AG04450 (cell line): ENCODE measurements at regions of chr6 and their contacts with region 1.

Region 1: DNA sequence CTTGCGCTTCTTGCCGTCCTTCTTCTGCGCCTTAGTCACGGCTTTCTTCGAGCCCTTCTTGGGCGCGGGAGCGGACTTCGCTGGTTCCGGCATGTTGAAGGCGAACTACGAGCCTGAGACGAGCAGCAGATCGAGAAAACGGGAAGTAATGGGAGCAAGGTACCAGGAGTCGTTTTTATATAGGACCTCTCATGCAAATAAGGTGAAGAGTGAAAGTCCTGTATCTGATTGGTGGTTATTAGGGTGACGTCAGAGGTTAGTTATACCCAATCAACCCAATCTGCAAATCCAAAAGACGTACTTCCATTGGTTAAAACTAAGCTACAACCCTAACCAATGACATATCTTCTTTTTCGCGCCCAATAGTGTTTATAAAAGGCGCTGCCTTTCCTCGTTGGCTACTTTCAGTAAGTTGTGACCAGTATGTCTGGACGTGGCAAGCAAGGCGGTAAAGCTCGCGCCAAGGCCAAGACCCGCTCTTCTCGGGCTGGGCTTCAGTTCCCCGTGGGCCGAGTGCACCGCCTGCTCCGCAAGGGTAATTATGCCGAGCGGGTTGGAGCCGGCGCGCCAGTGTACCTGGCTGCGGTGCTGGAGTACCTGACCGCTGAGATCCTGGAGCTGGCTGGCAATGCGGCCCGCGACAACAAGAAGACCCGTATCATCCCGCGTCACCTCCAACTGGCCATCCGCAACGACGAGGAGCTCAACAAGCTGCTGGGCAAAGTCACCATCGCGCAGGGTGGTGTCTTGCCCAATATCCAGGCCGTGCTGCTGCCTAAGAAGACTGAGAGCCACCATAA is 100.6 kb upstream of the PRSS16 start:
- DNase-seq: peak; percentile 99
- H3K4me3 ChIP-seq: peak overlapping the region; percentile 73
- H3K27ac ChIP-seq: peak overlapping the region; percentile 98
- H3K27me3 ChIP-seq: no peaks in the 10 kb centered on the region
- CTCF ChIP-seq: no peak

Region 2: GRCh38 chr6:26025894-26026832 is 1120.7 kb before region 1 on chr6:
- CTCF ChIA-PET with region 1: no interaction called
- POLR2A ChIA-PET with region 1: interaction called, 14 read pairs
- DNase-seq: peak; percentile 94
- H3K4me3 ChIP-seq: peak overlapping the region; percentile 78
- H3K27ac ChIP-seq: peak overlapping the region; percentile 91
- H3K27me3 ChIP-seq: no peaks in the 10 kb centered on the region
- CTCF ChIP-seq: peak; percentile 93

Region 3: DNA sequence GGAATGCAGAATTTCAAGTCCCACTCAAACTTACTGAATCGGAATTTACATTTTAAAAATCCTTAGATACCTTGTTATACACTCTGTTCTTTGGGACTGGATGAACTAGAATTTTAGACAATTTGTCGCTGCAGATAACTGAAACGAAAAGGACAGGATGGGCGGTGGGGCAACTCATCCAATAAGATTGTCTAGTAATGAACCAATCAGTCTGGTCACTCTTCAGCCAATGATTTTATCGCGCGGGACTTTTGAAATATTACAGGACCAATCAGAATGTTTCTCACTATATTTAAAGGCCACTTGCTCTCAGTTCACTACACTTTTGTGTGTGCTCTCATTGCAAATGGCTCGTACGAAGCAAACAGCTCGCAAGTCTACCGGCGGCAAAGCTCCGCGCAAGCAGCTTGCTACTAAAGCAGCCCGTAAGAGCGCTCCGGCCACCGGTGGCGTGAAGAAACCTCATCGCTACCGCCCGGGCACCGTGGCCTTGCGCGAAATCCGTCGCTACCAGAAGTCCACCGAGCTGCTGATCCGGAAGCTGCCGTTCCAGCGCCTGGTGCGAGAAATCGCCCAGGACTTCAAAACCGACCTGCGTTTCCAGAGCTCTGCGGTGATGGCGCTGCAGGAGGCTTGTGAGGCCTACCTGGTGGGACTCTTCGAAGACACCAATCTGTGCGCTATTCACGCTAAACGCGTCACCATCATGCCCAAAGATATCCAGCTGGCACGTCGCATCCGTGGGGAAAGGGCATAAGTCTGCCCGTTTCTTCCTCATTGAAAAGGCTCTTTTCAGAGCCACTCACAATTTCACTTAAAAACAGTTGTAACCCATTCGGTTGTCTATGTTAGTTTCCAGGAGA is 1101.6 kb before region 1 on chr6:
- CTCF ChIA-PET with region 1: no interaction called
- POLR2A ChIA-PET with region 1: interaction called, 18 read pairs
- DNase-seq: peak; percentile 82
- H3K4me3 ChIP-seq: peak overlapping the region; percentile 66
- H3K27ac ChIP-seq: peak overlapping the region; percentile 63
- H3K27me3 ChIP-seq: no peaks in the 10 kb centered on the region
- CTCF ChIP-seq: peak; percentile 19; the same call in 1 of the 2 replicates

Region 4: DNA sequence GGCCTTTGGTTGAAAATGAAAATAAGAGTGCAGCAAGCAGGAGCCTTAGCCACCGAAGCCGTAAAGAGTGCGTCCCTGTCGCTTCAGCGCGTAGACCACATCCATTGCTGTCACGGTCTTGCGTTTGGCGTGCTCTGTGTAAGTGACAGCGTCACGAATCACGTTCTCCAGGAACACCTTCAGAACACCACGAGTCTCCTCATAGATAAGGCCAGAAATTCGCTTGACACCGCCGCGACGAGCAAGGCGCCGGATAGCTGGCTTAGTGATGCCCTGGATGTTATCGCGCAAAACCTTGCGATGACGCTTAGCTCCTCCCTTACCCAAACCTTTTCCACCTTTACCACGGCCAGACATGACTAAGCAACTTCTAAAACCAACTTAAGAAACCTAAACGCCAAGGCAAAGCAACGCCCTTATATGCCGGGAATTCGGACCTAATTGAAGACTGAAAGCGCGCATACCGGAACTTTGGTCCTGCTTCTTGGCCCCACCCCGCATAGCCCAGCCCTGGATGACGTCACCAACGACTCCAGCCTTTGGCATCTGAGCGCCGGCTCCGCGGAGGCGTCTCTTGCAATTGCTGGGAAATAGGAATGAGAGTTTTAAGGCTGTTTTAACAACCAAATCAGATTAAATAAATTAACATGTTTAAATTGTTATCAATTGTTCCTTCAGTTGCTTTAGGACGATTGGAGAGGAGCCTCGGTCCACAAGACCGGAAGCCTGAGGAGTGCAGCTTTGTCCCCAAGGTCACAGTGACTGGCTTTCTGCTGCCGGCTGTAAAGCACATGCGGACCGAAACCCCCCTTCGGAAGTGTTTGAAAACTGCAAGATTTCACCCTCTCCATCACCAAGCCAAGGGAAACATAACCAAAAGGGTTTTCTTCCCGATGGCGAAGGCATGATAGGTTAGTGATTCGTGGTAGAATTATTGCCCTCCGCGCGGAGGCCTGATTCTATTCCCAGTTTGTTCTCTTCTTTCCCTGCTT is 861.5 kb before region 1 on chr6:
- CTCF ChIA-PET with region 1: no interaction called
- POLR2A ChIA-PET with region 1: interaction called, 10 read pairs
- DNase-seq: peak; percentile 97
- H3K4me3 ChIP-seq: peak overlapping the region; percentile 99
- H3K27ac ChIP-seq: peak overlapping the region; percentile 98
- H3K27me3 ChIP-seq: no peaks in the 10 kb centered on the region
- CTCF ChIP-seq: no peak

Region 5: DNA sequence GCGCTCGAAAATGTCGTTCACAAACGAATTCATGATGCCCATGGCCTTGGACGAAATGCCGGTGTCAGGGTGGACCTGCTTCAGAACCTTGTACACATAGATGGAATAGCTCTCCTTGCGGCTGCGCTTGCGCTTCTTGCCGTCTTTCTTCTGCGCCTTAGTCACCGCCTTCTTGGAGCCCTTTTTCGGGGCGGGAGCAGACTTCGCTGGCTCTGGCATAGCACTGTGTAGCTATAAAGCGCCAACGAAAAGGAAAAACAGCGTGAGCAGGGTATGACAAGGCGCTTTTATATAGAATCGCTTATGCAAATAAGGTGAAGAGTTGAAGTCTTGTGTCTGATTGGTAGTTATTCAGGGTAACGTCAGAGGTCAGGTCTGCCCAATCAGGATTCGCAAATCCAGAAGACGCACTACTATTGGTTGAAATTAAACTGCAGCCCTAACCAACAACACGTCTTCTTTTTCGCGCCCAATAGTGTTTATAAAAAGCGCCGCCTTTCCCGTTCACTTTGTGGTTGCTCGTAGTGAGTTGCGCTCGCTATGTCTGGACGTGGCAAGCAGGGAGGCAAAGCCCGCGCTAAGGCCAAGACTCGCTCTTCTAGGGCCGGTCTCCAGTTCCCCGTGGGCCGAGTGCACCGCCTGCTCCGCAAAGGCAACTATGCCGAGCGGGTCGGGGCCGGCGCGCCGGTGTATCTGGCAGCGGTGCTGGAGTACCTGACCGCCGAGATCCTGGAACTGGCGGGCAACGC is 14.2 kb before region 1 on chr6:
- CTCF ChIA-PET with region 1: interaction called, 3 read pairs
- POLR2A ChIA-PET with region 1: interaction called, 251 read pairs
- DNase-seq: peak; percentile 100
- H3K4me3 ChIP-seq: peak overlapping the region; percentile 70
- H3K27ac ChIP-seq: peak overlapping the region; percentile 96
- H3K27me3 ChIP-seq: no peaks in the 10 kb centered on the region
- CTCF ChIP-seq: no peak

Region 6: DNA sequence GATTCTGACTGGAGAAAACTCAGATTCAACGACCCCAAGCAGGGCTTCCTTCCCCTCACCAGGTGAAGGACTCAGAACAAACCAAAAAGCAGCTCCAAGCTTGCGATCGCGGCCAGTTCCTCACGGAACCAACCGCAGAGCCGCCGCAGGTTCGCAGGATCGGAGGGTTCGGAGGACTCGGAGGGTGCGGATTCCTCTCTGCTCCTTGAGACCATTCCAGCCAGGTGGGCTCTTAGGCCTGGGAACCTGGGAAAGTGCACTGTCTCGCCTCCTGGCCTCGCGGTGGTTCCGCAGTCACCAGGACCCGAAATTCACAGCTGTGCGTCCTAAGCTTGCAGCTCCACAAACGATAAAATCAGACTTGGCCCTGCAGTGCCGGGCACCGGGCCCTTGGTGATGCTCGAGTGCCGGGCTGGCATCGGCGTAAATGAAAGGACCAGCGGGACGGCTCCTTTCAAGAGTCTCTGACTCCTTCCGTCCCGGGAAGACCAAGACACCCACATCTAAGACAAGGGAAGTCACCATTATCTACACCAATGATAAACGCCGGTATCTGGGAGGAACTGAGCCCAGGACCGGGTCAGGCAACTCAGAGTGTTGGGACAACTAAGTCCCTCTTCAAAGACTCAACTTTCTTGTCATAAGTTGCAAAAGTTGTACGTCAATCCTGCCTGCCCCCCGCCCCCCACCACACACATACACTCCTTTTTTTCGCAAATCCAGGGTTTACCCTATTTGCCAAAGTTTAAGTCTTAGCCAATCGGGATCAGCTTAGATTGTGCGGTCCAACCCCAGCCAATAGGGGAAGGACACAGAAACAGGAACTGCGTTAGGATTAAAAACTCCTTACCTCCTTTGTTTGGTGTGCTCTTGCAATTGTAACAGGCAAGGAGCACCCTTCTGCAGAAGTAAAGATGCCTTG is 30.8 kb after region 1 on chr6:
- CTCF ChIA-PET with region 1: interaction called, 3 read pairs
- POLR2A ChIA-PET with region 1: interaction called, 17 read pairs
- DNase-seq: peak; percentile 85
- H3K4me3 ChIP-seq: peak overlapping the region; percentile 95
- H3K27ac ChIP-seq: peak overlapping the region; percentile 96
- H3K27me3 ChIP-seq: peaks cover 4% of the 10 kb centered on the region
- CTCF ChIP-seq: peak; percentile 52

Region 7: GRCh38 chr6:27213544-27214125 is 66.7 kb after region 1 on chr6:
- CTCF ChIA-PET with region 1: no interaction called
- POLR2A ChIA-PET with region 1: no interaction called
- DNase-seq: no peak
- H3K4me3 ChIP-seq: no peak overlapping the region
- H3K27ac ChIP-seq: no peak overlapping the region
- H3K27me3 ChIP-seq: peaks cover 3% of the 10 kb centered on the region
- CTCF ChIP-seq: no peak

Region 8: DNA sequence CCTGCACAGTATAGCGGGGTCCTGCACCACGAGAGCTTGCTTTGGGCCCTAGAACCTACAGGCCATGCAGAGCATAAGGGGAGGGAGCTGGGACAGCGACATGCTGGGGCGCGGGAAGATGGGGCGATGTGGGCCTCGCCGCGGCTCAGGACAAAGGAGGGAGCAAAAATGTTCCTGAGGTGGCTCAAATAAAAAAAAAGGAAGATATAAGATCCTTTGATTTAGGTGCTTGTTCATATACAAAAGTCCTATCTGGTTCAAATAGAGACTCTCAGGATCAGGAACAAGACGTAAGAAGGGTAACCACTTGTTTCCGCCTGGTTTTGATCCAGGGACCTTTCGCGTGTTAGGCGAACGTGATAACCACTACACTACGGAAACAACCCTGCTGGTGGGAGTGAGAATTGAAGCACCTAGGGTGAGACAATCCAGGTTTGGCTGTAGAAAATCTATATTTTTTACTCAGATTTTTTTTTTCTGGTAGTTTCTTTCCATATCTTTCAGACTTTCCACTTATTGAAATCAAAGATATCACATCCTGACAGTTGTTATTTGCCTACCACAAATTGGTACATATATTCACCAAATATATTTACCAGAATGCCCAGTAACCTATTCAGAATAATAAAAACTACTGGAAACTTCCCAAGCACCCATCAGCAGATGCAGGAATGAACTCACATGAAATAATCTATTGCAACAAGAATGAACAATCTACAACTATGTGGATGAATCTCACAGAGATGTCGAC is 503.9 kb after region 1 on chr6:
- CTCF ChIA-PET with region 1: no interaction called
- POLR2A ChIA-PET with region 1: no interaction called
- DNase-seq: no peak
- H3K4me3 ChIP-seq: no peak overlapping the region
- H3K27ac ChIP-seq: no peak overlapping the region
- H3K27me3 ChIP-seq: no peaks in the 10 kb centered on the region
- CTCF ChIP-seq: 0 out of 2 replicates have a peak, but pooled peaks have one; percentile 5

Region 9: GRCh38 chr6:27809939-27810767 is 663.2 kb after region 1 on chr6:
- CTCF ChIA-PET with region 1: interaction called, 3 read pairs
- POLR2A ChIA-PET with region 1: interaction called, 46 read pairs
- DNase-seq: peak; percentile 95
- H3K4me3 ChIP-seq: peak overlapping the region; percentile 85
- H3K27ac ChIP-seq: peak overlapping the region; percentile 96
- H3K27me3 ChIP-seq: no peaks in the 10 kb centered on the region
- CTCF ChIP-seq: peak; percentile 24